Gastrocnemius medialis (tissue), 4 donors: ENCODE measurements at regions of chr18 and their contacts with region 1.

Region 1: DNA sequence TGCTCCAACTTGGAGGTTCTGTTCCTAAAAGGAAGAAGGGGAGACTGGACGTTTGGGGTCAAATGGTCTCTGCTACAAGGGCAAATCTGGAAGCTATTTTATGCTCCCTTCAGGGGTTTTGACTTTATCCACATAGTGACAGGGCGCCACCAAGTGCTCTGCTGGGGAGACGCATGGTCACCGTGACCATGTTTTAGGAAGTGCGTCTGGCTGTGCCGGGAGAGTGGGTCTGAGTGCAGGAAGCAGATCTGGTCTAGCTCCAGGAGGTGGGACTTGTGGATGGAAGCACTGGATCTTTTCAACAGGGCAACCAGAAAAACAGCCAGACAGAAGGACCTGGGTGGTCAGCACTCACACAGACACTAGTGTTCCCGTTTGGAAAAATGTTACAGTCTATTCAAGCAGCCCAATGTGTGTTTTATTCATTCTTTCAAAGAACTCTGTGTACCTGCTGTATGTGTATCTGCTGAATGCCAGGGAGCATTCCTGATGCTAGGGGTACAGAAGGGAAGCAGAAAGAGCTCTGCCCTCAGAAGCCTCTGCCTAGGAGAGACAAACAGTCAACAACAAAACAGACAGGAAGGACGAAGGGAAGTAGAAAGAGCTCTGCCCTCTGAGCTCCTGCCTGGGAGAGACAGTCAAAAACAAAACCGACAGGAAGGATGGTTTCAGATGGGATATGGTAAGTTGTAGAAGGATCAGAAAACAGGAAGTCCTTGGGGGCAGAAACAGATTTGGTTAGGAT is 14.3 kb downstream of the IMPA2 start:
- DNase-seq: peak; percentile 57 to 59
- ATAC-seq: peak; percentile 48 to 59
- H3K4me3 ChIP-seq: peak overlapping the region in 1 of 4 donors; percentile 21
- H3K27ac ChIP-seq: peak overlapping the region; percentile 83 to 100 (median 98)
- H3K4me1 ChIP-seq: peaks cover 65 to 78% of the 10 kb centered on the region in 2 donors
- H3K27me3 ChIP-seq: no peaks in the 10 kb centered on the region
- CTCF ChIP-seq: peak; percentile 64 to 88 (median 76)
- POLR2A ChIP-seq: no peak

Region 2: GRCh38 chr18:11932393-11932792 is 63.2 kb before region 1 on chr18:
- in situ Hi-C with region 1: loop called in 3 of 4 experiments (anchors 5 to 10 kb)
- intact Hi-C with region 1: no loop called
- DNase-seq: no peak
- ATAC-seq: no peak
- H3K4me3 ChIP-seq: no peak overlapping the region
- H3K27ac ChIP-seq: no peak overlapping the region
- H3K4me1 ChIP-seq: no peaks in the 10 kb centered on the region
- H3K27me3 ChIP-seq: no peaks in the 10 kb centered on the region
- CTCF ChIP-seq: no peak
- POLR2A ChIP-seq: no peak

Region 3: DNA sequence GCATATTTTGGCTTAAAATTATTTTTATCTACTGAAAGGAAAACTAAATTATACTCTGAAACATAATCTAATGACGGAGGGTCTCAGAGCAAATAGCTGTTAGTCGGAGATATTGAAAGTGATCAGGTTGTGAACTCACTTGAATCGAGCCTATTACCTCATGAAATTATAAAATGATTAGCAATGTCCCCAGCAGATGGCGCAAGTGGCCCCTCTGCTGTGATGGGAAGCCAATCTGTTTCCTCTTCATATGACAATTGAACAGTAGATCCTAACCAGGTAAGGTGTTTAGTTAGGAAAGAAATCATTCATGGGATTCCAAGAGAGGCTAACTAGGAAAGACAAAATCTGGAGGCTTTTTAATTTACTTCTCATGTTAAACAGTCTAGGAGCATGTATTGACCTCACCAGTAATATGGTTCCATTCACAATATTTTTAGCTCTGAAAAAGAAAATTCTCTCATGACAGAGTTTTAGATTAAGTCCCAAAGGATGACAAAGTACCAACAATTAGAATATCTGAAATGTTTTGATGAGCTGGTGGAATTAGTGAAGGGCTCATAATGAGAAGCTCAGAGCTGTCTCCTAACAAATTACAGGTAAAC is 57.6 kb before region 1 on chr18:
- in situ Hi-C with region 1: loop called (anchors 5 to 10 kb)
- intact Hi-C with region 1: loop called (anchors 1 kb)
- DNase-seq: peak; percentile 45 to 67
- ATAC-seq: peak; percentile 87
- H3K4me3 ChIP-seq: no peak overlapping the region
- H3K27ac ChIP-seq: peak overlapping the region in 3 of 4 donors; percentile 41 to 44 (median 44)
- H3K4me1 ChIP-seq: peaks cover 0 to 2% of the 10 kb centered on the region in 2 donors
- H3K27me3 ChIP-seq: no peaks in the 10 kb centered on the region
- CTCF ChIP-seq: peak; percentile 80 to 90 (median 85)
- POLR2A ChIP-seq: no peak

Region 4: DNA sequence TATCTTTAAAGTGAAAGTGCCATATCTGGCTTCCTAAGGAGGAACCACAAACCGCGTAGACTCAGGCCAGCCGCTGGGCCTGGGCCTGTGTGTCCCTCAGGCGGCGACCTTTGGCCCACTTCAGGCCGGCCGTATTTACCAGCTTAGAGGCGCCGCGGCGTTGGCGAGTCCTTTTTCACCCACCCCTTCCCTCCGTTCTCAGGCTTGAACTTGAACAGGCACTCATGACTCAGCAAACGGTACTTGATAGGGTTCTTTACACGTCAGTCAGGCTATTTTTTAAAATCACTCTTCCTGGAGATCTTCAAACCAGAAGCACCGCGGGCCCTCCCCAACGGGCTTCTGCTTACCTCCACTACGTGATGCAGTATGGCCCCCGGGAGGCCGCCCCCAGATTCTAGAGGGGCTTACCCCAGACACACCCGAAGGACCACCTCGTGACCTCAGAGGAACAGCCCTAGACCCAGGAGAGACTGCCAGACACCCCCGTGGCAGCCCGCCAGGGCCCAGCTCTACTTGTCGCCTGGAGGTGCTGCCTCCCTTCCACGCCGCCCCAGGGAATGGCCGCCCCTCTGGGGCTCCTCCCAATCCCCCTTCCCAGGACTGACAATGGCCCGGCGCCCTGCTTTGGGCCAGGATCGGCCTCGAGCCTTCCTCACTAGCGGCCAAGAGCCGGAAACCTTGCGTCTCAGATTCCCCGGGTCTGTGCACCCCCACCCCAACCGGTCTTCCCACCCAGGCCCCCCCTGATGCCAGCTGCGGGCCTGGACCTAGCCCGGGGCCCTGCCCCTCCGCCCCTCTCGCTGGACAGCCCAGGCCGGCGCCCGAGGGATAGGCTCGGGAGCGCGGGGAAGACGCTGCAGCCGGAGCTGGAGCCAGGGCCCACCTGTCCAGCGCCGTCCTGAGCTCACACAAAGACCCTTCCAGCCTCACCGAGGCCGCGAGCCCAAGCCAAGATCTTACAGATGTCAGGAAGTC is 48.1 kb before region 1 on chr18:
- in situ Hi-C with region 1: loop called in 1 of 4 experiments (anchors 5 kb)
- intact Hi-C with region 1: loop called (anchors 2 kb)
- DNase-seq: peak; percentile 95
- ATAC-seq: peak; percentile 85 to 92
- H3K4me3 ChIP-seq: peak overlapping the region; percentile 60 to 75 (median 68)
- H3K27ac ChIP-seq: peak overlapping the region; percentile 91 to 100 (median 96)
- H3K4me1 ChIP-seq: peaks cover 24 to 35% of the 10 kb centered on the region in 2 donors
- H3K27me3 ChIP-seq: no peaks in the 10 kb centered on the region
- CTCF ChIP-seq: peak in 1 of 5 experiments; percentile 9
- POLR2A ChIP-seq: peak; percentile 67 to 79

Region 5: DNA sequence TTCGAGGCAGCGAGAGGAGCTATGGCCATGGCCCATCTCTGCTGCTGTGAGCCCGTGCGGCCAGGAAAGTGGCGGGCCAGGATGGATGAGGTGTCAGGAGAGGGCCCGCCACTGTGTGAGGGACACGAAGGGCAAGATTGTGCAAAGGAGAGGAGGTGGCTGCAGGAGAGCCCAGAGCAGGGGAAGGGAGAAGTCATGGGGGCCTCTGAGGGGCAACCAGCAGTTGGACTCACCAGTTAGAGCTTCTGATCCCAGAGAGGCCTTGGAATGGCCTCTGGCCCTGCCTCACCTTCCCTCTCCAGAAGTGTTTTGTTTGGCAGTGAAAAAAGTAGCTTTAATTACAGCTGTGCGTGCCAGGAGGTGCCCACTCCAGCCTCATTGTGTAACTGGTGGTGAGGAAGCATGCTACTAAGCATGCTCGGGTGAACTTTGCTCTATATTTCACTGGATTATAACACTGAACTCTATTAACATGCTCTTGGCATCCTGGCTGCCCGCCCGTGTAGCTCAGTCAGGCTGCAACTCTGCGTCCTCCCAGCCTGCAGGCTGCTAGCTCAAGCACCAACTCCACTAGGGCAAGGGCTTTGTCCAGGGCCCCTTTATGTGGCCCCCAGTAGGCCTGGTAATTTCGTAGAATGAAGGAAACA is 19.9 kb after region 1 on chr18:
- in situ Hi-C with region 1: no loop called
- intact Hi-C with region 1: loop called (anchors 2 kb)
- DNase-seq: peak in 1 of 2 donors; percentile 76
- ATAC-seq: peak; percentile 77 to 89
- H3K4me3 ChIP-seq: no peak overlapping the region
- H3K27ac ChIP-seq: peak overlapping the region; percentile 59 to 78 (median 70)
- H3K4me1 ChIP-seq: peaks cover 28 to 39% of the 10 kb centered on the region in 2 donors
- H3K27me3 ChIP-seq: no peaks in the 10 kb centered on the region
- CTCF ChIP-seq: no peak
- POLR2A ChIP-seq: no peak

Region 6: DNA sequence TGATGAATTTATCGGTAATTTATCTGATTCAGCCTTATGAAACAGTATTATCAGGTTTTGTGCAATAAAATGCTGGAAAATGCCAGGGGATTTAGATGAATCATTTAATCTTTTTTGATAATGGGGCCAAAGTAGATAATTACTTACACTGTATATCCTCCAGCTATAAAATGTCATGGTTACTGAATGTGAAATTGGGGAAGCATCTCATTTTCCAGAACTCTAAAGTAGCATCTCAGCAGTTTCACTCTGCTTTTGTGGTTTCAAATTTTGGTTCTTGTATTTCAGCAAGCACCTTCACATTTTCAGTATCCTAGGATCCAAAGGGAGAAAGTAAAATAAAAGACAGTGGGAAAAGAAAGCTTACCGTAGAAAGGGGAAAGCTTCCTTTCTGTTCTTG is 110.9 kb after region 1 on chr18:
- in situ Hi-C with region 1: no loop called
- intact Hi-C with region 1: no loop called
- DNase-seq: no peak
- ATAC-seq: no peak
- H3K4me3 ChIP-seq: no peak overlapping the region
- H3K27ac ChIP-seq: no peak overlapping the region
- H3K4me1 ChIP-seq: no peaks in the 10 kb centered on the region
- H3K27me3 ChIP-seq: no peaks in the 10 kb centered on the region
- CTCF ChIP-seq: no peak
- POLR2A ChIP-seq: no peak